ENCODE measurements at regions of chr14 and their contacts with region 1.

Region 1: GRCh38 chr14:93206793-93207467 is at the starts of genes GON7 and UBR7:
- DNase-seq: peak; percentile 84
- ATAC-seq: peak; percentile 93
- H3K4me3 Mint-ChIP-seq: peak within 1 kb of the TSS; percentile 96
- H3K27ac Mint-ChIP-seq: peak within 1 kb of the TSS; percentile 90
- H3K4me1 Mint-ChIP-seq: peaks cover 56% of the 10 kb centered on the region
- H3K27me3 Mint-ChIP-seq: no peaks in the 10 kb centered on the region
- CTCF ChIP-seq: no peak
- total RNA-seq, gene GON7: 11.3 and 11.4 TPM in 2 replicates
- total RNA-seq, gene UBR7: 19.3 and 19.5 TPM in 2 replicates

Region 2: GRCh38 chr14:92886337-92886736 is 320.6 kb before region 1 on chr14:
- CTCF ChIA-PET with region 1: no interaction called
- POLR2A ChIA-PET with region 1: no interaction called
- intact Hi-C with region 1: no loop called
- DNase-seq: no peak
- ATAC-seq: no peak
- H3K4me3 Mint-ChIP-seq: no peak overlapping the region
- H3K27ac Mint-ChIP-seq: no peak overlapping the region
- H3K4me1 Mint-ChIP-seq: no peaks in the 10 kb centered on the region
- H3K27me3 Mint-ChIP-seq: peaks cover 19% of the 10 kb centered on the region
- CTCF ChIP-seq: no peak

Region 3: DNA sequence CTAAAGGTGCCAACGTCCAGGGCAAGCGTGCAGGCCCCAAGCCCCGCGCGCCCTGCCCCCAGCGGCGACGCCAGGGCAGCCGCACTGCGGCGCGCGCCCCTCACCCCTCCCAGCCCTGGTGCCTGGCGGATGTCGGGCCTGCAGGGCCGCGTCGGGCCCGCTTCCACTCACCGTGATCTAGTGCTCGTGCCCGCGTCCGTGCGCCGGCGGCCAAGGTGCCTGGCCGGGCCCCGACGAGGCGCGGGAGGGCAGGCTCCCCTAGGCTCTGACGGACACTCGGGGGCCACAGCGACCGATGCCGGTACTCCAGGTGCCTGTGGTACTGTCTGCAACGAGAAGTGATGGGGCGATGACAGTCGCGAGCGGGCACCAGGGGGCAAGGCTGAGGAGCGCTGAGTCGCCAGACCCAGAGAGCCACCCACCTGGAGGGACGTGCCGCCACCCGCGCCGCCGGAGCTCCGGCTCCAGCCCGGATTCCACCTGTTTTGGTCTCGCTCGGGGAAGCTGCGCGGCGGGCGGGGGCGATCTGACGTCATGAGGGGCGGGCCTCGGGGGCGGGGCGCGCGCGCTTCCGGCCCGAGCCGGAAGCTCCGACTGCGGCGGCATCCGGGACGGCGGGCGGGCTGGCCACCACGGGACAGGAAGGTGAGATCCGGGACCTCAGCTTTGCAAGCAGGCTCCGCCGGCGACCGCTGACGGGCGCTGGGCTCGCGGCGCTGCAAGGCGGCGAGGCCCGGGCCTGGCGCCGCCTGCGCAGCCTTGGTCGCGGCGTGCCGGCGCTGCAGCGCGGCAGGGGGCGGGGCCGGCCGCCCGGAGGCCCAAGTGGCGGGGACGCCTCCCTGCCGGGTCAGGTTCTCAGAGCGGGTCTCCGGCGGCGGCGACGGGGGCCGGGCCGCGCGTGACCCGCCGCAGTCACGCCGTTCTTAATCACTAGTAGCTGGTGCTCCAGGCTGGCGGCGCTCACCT is 22.3 kb before region 1 on chr14 and contains the starts of genes LYSET and MOAP1:
- CTCF ChIA-PET with region 1: interaction called, 16 read pairs
- POLR2A ChIA-PET with region 1: interaction called, 38 read pairs
- intact Hi-C with region 1: loop called (anchors 1 kb)
- DNase-seq: peak; percentile 81
- ATAC-seq: peak; percentile 83
- H3K4me3 Mint-ChIP-seq: peak within 1 kb of the TSS; percentile 92
- H3K27ac Mint-ChIP-seq: peak within 1 kb of the TSS; percentile 93
- H3K4me1 Mint-ChIP-seq: peaks cover 24% of the 10 kb centered on the region
- H3K27me3 Mint-ChIP-seq: no peaks in the 10 kb centered on the region
- CTCF ChIP-seq: no peak
- total RNA-seq, gene LYSET: 17.6 and 19.3 TPM in 2 replicates
- total RNA-seq, gene MOAP1: 21.3 and 24.4 TPM in 2 replicates

Region 4: DNA sequence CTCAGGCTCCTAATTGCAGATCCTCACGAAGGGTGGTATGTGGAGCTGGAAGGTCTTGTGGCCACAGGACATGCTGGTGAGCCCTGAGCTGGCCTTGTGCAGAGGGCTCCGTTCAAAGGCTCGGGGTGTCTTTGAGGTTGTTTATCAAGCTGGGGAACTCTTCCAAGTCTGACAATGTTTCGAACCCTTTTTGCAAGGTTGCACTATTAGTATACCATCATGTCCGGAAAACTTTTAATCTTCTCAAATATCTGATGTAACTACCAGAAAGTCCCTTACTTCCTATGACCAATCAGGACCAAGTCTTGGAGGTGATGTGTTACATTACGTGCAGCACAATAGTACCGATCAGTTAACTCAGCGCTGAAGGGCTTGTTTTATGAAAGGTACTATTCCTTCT is 21.6 kb after region 1 on chr14:
- CTCF ChIA-PET with region 1: no interaction called
- POLR2A ChIA-PET with region 1: no interaction called
- intact Hi-C with region 1: no loop called
- DNase-seq: no peak
- ATAC-seq: no peak
- H3K4me3 Mint-ChIP-seq: no peak overlapping the region
- H3K27ac Mint-ChIP-seq: no peak overlapping the region
- H3K4me1 Mint-ChIP-seq: peaks cover 10% of the 10 kb centered on the region
- H3K27me3 Mint-ChIP-seq: no peaks in the 10 kb centered on the region
- CTCF ChIP-seq: no peak

Region 5: DNA sequence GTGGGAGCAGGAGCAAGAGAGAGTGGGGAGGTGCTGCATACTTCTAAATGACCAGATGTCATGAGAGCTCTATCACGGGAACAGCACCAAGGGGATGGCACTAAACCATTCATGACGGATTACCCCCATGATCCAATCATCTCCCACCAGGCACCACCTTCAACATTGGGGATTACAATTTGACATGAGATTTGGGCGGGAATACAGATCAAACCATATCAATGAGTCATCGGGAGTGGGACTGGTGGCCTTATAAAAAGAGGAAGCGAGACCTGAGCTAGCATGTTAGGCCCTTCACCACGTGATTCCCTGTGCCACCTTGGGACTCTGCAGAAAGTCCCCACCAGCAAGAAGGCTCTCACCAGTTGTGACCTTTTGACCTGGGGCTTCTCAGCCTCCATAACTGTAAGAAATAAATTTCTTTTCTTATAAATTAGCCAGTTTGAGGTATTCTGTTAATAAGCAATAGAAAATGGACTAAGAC is 168.8 kb after region 1 on chr14:
- CTCF ChIA-PET with region 1: no interaction called
- POLR2A ChIA-PET with region 1: no interaction called
- intact Hi-C with region 1: loop called (anchors 5 kb)
- DNase-seq: peak; percentile 53
- ATAC-seq: peak; percentile 96
- H3K4me3 Mint-ChIP-seq: peak overlapping the region; percentile 57
- H3K27ac Mint-ChIP-seq: peak overlapping the region; percentile 92
- H3K4me1 Mint-ChIP-seq: peaks cover 55% of the 10 kb centered on the region
- H3K27me3 Mint-ChIP-seq: no peaks in the 10 kb centered on the region
- CTCF ChIP-seq: no peak

Region 6: DNA sequence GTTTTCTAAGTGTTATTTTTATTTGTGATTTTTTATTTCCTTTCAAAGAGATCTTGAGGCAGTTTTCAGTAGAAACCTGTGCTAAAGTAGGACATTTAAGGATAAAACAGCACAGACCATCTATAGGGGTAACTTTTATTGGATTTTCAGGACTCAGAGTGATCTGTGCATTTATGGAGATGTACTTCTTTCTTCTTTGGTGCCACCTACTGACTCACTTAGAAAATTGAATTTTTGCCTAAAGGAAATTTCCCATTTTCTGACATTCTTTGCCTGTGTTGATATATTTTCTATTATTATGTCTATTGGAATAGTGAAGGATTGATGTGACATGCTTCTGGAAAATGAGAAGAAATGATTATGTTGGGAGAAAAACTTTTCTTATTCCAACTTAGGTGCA is 336.8 kb after region 1 on chr14:
- CTCF ChIA-PET with region 1: interaction called, 6 read pairs
- POLR2A ChIA-PET with region 1: no interaction called
- intact Hi-C with region 1: loop called (anchors 1 kb)
- DNase-seq: no peak
- ATAC-seq: no peak
- H3K4me3 Mint-ChIP-seq: no peak overlapping the region
- H3K27ac Mint-ChIP-seq: no peak overlapping the region
- H3K4me1 Mint-ChIP-seq: peaks cover 9% of the 10 kb centered on the region
- H3K27me3 Mint-ChIP-seq: peaks cover 6% of the 10 kb centered on the region
- CTCF ChIP-seq: no peak

Region 7: DNA sequence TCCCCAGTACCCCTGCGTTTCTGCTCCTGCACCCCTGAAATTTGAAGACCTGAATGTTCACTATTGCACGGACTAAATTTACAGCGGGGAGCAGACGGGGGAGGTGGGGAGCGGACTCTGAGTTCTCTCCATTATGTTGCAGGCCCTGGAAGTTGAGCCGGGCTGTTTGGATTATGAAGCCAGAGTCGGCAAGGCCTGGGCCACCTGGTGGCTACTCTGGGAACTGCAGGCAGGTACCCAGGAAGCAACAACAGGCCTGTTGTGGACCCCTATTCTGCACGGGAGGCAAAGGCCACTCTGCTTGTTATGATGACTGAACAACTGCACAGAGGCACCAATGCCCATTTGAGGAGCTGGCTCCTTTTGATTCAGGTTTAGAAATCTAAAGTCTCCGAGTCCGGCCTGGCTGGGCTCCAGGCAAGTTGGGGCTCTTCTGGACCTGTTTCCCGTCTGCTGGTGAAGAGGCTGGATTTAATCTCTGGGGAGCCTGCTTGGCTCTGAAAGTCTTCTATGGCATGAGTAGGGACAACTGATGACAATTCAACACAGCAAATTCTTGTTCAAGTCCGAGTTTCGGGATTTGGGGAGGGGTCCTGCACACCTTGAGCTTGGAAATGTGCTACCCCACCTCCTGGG is 686.1 kb after region 1 on chr14:
- CTCF ChIA-PET with region 1: no interaction called
- POLR2A ChIA-PET with region 1: no interaction called
- intact Hi-C with region 1: loop called (anchors 5 kb)
- DNase-seq: peak; percentile 71
- ATAC-seq: peak; percentile 65
- H3K4me3 Mint-ChIP-seq: no peak overlapping the region
- H3K27ac Mint-ChIP-seq: no peak overlapping the region
- H3K4me1 Mint-ChIP-seq: no peaks in the 10 kb centered on the region
- H3K27me3 Mint-ChIP-seq: peaks cover 32% of the 10 kb centered on the region
- CTCF ChIP-seq: peak; percentile 56

Measured in activated B cell treated with CpG ODN at 0.5 μM for 24 hours (primary cell).